MCF 10A (cell line): ENCODE measurements at regions of chr18 and their contacts with region 1.

Region 1: DNA sequence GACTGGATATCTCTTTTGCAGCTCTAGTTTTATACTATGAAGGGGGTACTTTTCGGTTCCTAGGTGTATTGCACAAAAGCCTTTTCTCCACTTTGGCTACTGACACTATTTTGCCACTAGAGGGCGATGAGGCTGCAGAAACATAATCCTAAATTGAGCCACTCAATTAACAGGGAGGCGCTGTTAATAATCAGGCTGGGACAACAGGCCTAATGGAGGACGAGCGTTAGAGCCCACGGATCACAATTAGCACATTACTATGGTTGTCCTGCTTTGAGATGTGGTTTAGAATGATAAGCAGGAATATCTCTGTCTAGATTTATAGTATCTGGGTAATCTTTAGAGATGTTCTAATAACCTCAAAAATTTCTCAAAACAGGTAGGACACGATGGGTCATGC is 62.2 kb upstream of the PMAIP1 start:
- DNase-seq: peak; percentile 82
- H3K4me3 Mint-ChIP-seq: no peak overlapping the region
- H3K27ac Mint-ChIP-seq: no peak overlapping the region
- H3K4me1 Mint-ChIP-seq: peaks cover 1% of the 10 kb centered on the region
- H3K27me3 Mint-ChIP-seq: no peaks in the 10 kb centered on the region
- CTCF ChIP-seq: peak; percentile 83

Region 2: DNA sequence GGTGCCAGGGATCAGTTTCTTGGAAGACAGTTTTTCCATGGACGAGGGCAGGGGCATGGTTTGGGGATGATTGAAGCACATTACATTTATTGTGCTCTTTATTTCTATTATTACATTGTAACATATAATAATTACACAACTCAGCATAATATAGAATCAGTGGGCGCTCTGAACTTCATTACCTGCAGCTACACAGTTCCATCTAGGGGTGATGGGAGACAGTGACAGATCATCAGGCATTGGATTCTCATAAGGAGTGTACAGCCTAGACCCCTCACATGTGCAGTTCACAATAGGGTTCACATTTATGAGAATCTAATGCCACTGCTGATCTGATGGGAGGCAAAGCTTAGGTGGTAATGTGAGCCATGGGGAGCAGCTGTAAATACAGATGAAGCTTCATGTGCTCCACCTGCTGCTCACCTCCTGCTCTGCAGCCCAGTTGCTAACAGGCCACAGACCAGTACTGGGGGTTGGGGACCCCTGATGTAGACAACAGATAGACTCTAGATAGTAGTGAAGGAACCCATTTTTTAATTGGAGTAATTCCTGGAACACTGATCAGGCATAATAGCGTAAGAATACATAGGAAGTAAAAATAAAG is 576.5 kb after region 1 on chr18:
- CTCF ChIA-PET with region 1: interaction called, 7 read pairs
- POLR2A ChIA-PET with region 1: no interaction called
- intact Hi-C with region 1: loop called (anchors 5 kb)
- DNase-seq: peak; percentile 20
- H3K4me3 Mint-ChIP-seq: no peak overlapping the region
- H3K27ac Mint-ChIP-seq: no peak overlapping the region
- H3K4me1 Mint-ChIP-seq: no peaks in the 10 kb centered on the region
- H3K27me3 Mint-ChIP-seq: peaks cover 74% of the 10 kb centered on the region
- CTCF ChIP-seq: peak; percentile 51

Region 3: GRCh38 chr18:60549338-60549960 is 711.9 kb after region 1 on chr18:
- CTCF ChIA-PET with region 1: interaction called, 5 read pairs
- POLR2A ChIA-PET with region 1: interaction called, 3 read pairs
- intact Hi-C with region 1: loop called (anchors 1 kb)
- DNase-seq: peak; percentile 53
- H3K4me3 Mint-ChIP-seq: no peak overlapping the region
- H3K27ac Mint-ChIP-seq: no peak overlapping the region
- H3K4me1 Mint-ChIP-seq: no peaks in the 10 kb centered on the region
- H3K27me3 Mint-ChIP-seq: peaks cover 58% of the 10 kb centered on the region
- CTCF ChIP-seq: peak; percentile 64